ENCODE measurements at regions of chr12 and their contacts with region 1.

Region 1: GRCh38 chr12:109899783-109900751 is at the start of gene TCHP:
- DNase-seq: peak; percentile 59 to 90 (median 69)
- ATAC-seq: peak; percentile 93
- H3K4me3 ChIP-seq: peak within 1 kb of the TSS; percentile 72
- H3K4me3 Mint-ChIP-seq: peak within 1 kb of the TSS; percentile 89
- H3K27ac ChIP-seq: peak within 1 kb of the TSS; percentile 55 to 64
- H3K27ac Mint-ChIP-seq: peak within 1 kb of the TSS; percentile 86
- H3K4me1 ChIP-seq: peaks cover 28% of the 10 kb centered on the region
- H3K4me1 Mint-ChIP-seq: peaks cover 25% of the 10 kb centered on the region
- H3K27me3 ChIP-seq: no peaks in the 10 kb centered on the region
- H3K27me3 Mint-ChIP-seq: no peaks in the 10 kb centered on the region
- CTCF ChIP-seq: no peak
- total RNA-seq, gene TCHP: 13.2 to 13.6 TPM

Region 2: DNA sequence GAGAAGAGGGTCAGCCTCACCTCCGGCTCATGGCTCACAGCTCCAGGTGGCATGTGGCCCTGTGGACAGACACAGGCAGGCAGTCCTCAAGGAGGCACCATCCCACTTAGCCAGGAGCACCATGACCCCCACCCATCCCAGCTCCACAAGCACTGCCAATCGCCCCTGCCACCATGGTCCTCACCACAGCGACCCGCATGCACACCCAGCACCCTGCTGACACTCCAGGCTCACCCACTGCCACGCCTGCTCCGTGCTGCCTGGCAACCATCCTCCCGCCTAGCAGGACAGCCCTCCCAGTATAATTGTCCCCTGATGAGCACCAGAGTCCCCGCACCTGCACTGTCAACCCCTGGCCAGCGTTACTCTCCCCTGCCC is 117.8 kb before region 1 on chr12:
- CTCF ChIA-PET with region 1: no interaction called
- POLR2A ChIA-PET with region 1: no interaction called
- intact Hi-C with region 1: no loop called
- DNase-seq: no peak
- ATAC-seq: no peak
- H3K4me3 ChIP-seq: no peak overlapping the region
- H3K4me3 Mint-ChIP-seq: no peak overlapping the region
- H3K27ac ChIP-seq: no peak overlapping the region
- H3K27ac Mint-ChIP-seq: no peak overlapping the region
- H3K4me1 ChIP-seq: no peaks in the 10 kb centered on the region
- H3K4me1 Mint-ChIP-seq: peaks cover 5% of the 10 kb centered on the region
- H3K27me3 ChIP-seq: peaks cover 0 to 2% of the 10 kb centered on the region in 2 experiments
- H3K27me3 Mint-ChIP-seq: peaks cover 8% of the 10 kb centered on the region
- CTCF ChIP-seq: no peak

Region 3: DNA sequence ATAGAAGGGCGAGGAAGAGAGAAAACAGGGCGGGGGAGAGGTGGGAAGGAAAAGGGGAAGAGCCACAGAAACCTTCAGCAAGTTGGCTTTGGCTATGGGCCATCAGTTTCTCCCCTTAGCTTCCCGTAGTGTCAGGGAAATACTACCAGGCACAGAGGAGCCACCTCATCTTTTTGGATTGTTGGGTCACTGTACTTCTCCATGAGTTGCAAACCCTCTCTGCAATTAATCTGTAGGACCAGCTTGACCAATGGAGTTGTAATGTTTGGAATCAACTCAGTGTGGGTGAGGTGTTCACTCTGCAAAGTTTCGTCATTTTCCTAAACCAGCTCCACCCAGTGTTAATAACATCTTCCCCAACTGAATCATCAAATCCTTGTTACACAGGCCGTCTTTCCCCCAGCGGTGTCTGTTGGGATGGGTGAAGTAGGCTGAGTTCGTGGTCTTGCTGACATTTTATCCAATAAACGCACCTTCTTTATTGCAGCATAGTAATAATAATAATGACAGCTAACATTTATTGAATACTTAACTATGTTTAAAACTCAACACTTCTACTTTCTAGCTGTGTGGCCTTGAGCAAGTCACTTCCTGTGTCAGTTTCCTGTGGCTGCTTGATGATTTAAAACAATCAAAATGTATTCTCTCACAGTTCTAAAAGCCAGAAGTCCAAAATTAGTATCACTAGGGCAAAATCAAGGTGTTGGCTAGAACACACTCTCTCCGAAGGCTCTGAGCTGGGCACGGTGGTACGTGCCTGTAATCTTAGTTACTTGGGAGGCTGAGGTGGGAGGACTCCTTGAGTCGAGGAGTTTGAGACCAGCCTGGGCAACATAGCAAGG is 11.7 kb before region 1 on chr12:
- CTCF ChIA-PET with region 1: no interaction called
- POLR2A ChIA-PET with region 1: interaction called, 17 read pairs
- intact Hi-C with region 1: no loop called
- DNase-seq: peak in 5 of 14 experiments; percentile 12 to 75 (median 58)
- ATAC-seq: peak; percentile 73
- H3K4me3 ChIP-seq: no peak overlapping the region
- H3K4me3 Mint-ChIP-seq: peak overlapping the region; percentile 27
- H3K27ac ChIP-seq: peak overlapping the region; percentile 73 to 79
- H3K27ac Mint-ChIP-seq: peak overlapping the region; percentile 86
- H3K4me1 ChIP-seq: peaks cover 44% of the 10 kb centered on the region
- H3K4me1 Mint-ChIP-seq: peaks cover 38% of the 10 kb centered on the region
- H3K27me3 ChIP-seq: no peaks in the 10 kb centered on the region
- H3K27me3 Mint-ChIP-seq: no peaks in the 10 kb centered on the region
- CTCF ChIP-seq: no peak

Measured in CD4-positive, alpha-beta T cell (primary cell).